Activated B cell treated with CpG ODN at 0.5 μM for 24 hours (primary cell): ENCODE measurements at regions of chr6 and their contacts with region 1.

Region 1: DNA sequence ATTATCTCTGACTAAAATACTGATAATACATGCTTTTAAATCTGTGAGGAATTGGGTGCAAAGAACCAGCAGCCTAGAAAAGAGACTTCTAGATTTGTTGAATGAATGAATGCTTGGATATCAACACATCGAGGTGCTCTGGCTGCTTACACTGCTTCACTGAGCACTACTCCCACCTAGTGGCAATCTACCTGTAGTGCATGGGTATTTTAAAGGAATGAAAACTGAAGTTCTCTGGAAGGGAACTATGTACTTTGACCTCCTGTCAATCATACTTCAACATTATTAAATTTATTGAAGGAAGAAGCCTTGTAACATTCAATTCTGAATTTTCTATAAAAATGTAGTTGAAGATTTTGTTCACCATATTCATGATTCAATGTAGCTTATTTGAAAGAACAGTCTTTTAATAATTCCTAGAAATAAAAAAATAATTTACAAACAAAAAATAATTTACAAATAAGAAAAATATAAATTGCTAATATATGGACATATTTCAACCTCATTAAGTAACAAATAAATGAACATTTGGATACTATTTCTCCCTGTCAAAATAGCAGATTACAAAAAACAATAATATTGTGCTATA is 111.2 kb upstream of the MMS22L start:
- DNase-seq: no peak
- ATAC-seq: peak; percentile 81
- H3K4me3 Mint-ChIP-seq: no peak overlapping the region
- H3K27ac Mint-ChIP-seq: no peak overlapping the region
- H3K4me1 Mint-ChIP-seq: no peaks in the 10 kb centered on the region
- H3K27me3 Mint-ChIP-seq: peaks cover 8% of the 10 kb centered on the region
- CTCF ChIP-seq: peak; percentile 97

Region 2: DNA sequence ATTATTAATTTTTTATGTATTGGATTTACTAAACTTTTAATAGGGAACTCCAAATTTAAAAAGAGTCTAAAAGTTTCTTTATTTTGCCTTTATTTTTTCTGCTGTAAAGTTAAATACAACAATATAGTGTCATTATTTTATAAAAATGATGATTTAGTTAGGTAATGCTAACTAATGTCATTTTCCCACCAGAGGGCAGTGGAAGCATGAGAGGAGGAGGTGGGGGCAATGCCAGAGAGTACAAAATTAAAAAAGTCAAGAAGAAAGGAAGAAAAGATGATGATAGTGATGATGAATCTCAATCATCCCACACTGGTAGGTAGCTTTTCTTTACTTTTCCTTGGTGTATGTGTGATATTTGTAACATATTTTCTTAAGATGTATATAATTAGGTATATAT is 851.6 kb before region 1 on chr6:
- CTCF ChIA-PET with region 1: no interaction called
- POLR2A ChIA-PET with region 1: no interaction called
- intact Hi-C with region 1: loop called (anchors 10 kb)
- DNase-seq: no peak
- ATAC-seq: no peak
- H3K4me3 Mint-ChIP-seq: no peak overlapping the region
- H3K27ac Mint-ChIP-seq: no peak overlapping the region
- H3K4me1 Mint-ChIP-seq: no peaks in the 10 kb centered on the region
- H3K27me3 Mint-ChIP-seq: no peaks in the 10 kb centered on the region
- CTCF ChIP-seq: no peak

Region 3: DNA sequence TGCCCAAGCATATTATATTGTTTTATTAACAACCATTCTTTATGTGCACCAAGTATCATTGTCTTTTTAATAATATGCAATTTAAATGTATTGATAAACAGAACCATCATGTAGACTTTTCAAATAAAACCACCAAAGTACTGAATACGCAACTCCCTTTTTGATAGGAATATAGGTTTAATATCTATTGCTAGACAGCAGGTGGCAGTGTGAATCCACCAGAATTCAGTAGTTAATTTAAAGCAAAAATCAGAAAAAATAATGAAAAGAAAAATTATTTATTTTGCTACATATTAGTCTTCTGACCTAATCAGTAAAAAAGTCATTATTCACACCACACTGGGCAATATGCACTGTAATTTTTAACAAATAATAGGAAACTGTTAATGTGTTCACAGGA is 326.0 kb before region 1 on chr6:
- CTCF ChIA-PET with region 1: interaction called, 3 read pairs
- POLR2A ChIA-PET with region 1: no interaction called
- intact Hi-C with region 1: loop called (anchors 1 kb)
- DNase-seq: no peak
- ATAC-seq: no peak
- H3K4me3 Mint-ChIP-seq: no peak overlapping the region
- H3K27ac Mint-ChIP-seq: no peak overlapping the region
- H3K4me1 Mint-ChIP-seq: no peaks in the 10 kb centered on the region
- H3K27me3 Mint-ChIP-seq: peaks cover 3% of the 10 kb centered on the region
- CTCF ChIP-seq: no peak

Region 4: DNA sequence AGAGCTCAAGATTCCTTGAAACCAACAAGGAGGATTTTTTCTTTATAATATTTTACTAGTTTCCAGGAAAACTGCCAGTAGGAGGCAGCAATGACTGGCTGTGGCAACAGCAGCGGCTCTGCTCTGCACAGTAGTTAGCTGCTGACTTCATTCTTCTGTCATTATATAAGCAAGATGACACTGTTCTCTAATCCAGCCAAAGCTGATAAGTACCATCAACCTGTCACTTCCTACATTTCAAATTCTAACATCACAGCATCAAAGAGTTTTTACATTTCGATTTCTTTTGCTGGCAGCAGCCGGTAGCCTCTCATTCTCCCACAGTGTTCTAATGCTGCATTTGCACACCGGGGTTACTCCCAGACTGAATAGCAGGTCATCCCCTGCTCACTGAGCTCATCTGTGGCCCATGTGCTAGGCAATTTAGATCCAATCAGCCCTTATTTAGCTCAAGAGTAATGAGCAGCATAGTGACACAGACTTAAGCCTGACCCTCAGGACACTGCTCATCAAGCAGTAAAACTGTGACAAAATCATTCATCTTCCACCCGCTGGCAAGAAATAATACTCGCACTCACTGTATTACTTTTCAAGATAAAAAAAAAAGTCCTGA is 179.0 kb before region 1 on chr6:
- CTCF ChIA-PET with region 1: interaction called, 4 read pairs
- POLR2A ChIA-PET with region 1: no interaction called
- intact Hi-C with region 1: loop called (anchors 1 kb)
- DNase-seq: no peak
- ATAC-seq: no peak
- H3K4me3 Mint-ChIP-seq: no peak overlapping the region
- H3K27ac Mint-ChIP-seq: no peak overlapping the region
- H3K4me1 Mint-ChIP-seq: no peaks in the 10 kb centered on the region
- H3K27me3 Mint-ChIP-seq: no peaks in the 10 kb centered on the region
- CTCF ChIP-seq: no peak

Region 5: DNA sequence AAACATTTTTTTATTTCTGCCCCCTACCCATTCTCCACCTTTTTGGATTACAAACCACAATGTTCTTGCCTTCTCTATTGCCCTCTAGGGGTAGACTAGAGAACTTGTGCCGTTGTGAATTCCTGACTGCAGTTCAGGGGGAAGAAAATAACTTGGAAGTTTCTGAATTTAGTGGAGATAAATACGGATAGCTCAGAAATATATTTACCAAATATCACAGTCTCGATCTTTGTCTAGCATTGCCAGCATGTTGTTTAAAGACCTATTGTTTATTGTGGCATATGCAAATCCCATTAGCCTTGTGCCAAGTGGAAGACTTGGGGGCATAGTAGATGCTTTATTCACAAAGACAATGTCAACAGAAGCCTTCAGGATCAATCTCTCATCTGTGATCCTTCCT is 42.8 kb after region 1 on chr6:
- CTCF ChIA-PET with region 1: no interaction called
- POLR2A ChIA-PET with region 1: no interaction called
- intact Hi-C with region 1: no loop called
- DNase-seq: no peak
- ATAC-seq: no peak
- H3K4me3 Mint-ChIP-seq: no peak overlapping the region
- H3K27ac Mint-ChIP-seq: no peak overlapping the region
- H3K4me1 Mint-ChIP-seq: no peaks in the 10 kb centered on the region
- H3K27me3 Mint-ChIP-seq: no peaks in the 10 kb centered on the region
- CTCF ChIP-seq: no peak

Region 6: GRCh38 chr6:97535800-97536199 is 141.5 kb after region 1 on chr6:
- CTCF ChIA-PET with region 1: no interaction called
- POLR2A ChIA-PET with region 1: no interaction called
- intact Hi-C with region 1: no loop called
- DNase-seq: no peak
- ATAC-seq: no peak
- H3K4me3 Mint-ChIP-seq: no peak overlapping the region
- H3K27ac Mint-ChIP-seq: no peak overlapping the region
- H3K4me1 Mint-ChIP-seq: no peaks in the 10 kb centered on the region
- H3K27me3 Mint-ChIP-seq: peaks cover 2% of the 10 kb centered on the region
- CTCF ChIP-seq: no peak

Region 7: GRCh38 chr6:99119109-99120031 is 1725.1 kb after region 1 on chr6:
- CTCF ChIA-PET with region 1: no interaction called
- POLR2A ChIA-PET with region 1: no interaction called
- intact Hi-C with region 1: loop called (anchors 5 kb)
- DNase-seq: no peak
- ATAC-seq: no peak
- H3K4me3 Mint-ChIP-seq: no peak overlapping the region
- H3K27ac Mint-ChIP-seq: no peak overlapping the region
- H3K4me1 Mint-ChIP-seq: no peaks in the 10 kb centered on the region
- H3K27me3 Mint-ChIP-seq: peaks cover 15% of the 10 kb centered on the region
- CTCF ChIP-seq: no peak